ENCODE measurements at regions of chr9 and their contacts with region 1.

Region 1: DNA sequence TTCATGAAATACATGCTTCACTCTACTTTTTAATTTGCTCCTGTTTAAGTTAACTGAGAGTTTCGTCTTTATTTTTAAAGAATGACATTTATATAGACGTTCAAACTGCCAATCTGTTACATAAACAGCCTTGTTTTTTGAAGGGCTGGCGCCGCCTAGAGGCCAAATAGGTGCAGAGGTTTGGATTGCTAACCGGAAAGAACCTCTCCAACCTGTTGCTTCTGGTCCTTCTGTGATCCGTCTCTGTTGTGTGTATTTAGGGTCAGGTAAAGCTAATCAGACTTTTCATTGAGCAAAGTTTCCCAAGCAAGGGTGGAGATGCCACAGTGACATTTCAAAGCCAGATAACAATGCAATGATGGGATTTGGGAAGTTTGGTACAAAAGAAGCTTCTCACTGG is 39.5 kb upstream of the GLIS3 start:
- DNase-seq: peak; percentile 90
- H3K4me3 Mint-ChIP-seq: peak overlapping the region; percentile 58
- H3K27ac Mint-ChIP-seq: peak overlapping the region; percentile 79
- H3K4me1 Mint-ChIP-seq: peaks cover 7% of the 10 kb centered on the region
- H3K27me3 Mint-ChIP-seq: no peaks in the 10 kb centered on the region

Region 2: GRCh38 chr9:3508521-3509291 is 830.7 kb before region 1 on chr9:
- CTCF ChIA-PET with region 1: no interaction called
- POLR2A ChIA-PET with region 1: no interaction called
- intact Hi-C with region 1: no loop called
- DNase-seq: no peak
- H3K4me3 Mint-ChIP-seq: peak overlapping the region; percentile 44
- H3K27ac Mint-ChIP-seq: peak overlapping the region; percentile 60
- H3K4me1 Mint-ChIP-seq: peaks cover 52% of the 10 kb centered on the region
- H3K27me3 Mint-ChIP-seq: no peaks in the 10 kb centered on the region

Region 3: GRCh38 chr9:4077499-4078102 is 261.8 kb before region 1 on chr9:
- CTCF ChIA-PET with region 1: interaction called, 5 read pairs
- POLR2A ChIA-PET with region 1: no interaction called
- intact Hi-C with region 1: loop called (anchors 10 kb)
- DNase-seq: peak; percentile 68
- H3K4me3 Mint-ChIP-seq: no peak overlapping the region
- H3K27ac Mint-ChIP-seq: no peak overlapping the region
- H3K4me1 Mint-ChIP-seq: no peaks in the 10 kb centered on the region
- H3K27me3 Mint-ChIP-seq: peaks cover 6% of the 10 kb centered on the region

Region 4: DNA sequence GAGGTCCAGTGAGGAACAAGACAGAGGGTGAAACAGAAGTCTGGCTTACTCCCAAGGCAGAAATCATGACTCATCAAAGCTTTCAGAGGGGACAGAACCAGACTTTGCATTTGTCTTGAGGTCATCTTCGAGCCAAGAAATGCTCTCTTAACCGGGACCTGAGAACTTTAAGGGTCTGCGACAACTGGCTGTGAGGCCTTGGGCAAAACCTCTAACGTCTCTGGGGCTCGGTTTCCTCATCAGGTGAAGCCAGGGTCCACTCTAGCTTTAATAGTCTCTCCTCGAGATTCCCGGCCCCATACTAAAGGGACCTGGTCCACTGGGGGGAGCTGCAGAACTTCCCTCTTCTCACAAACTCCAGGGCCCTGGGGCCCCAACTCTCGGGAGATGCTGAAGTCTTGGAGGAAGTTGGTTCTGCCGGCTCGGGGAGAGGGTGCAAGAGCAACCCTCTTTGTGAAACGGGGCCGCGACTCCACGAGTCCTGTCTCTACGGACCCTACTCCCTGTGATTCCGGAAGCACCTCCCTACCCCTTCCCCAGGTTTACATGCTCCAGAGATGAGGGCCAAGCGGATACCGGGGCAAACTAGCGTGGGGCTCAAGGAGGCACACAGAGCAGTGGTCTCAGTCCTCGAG is 42.1 kb before region 1 on chr9:
- CTCF ChIA-PET with region 1: interaction called, 4 read pairs
- POLR2A ChIA-PET with region 1: no interaction called
- intact Hi-C with region 1: loop called (anchors 1 kb)
- DNase-seq: peak; percentile 66
- H3K4me3 Mint-ChIP-seq: peak overlapping the region; percentile 89
- H3K27ac Mint-ChIP-seq: peak overlapping the region; percentile 59
- H3K4me1 Mint-ChIP-seq: peaks cover 27% of the 10 kb centered on the region
- H3K27me3 Mint-ChIP-seq: peaks cover 37% of the 10 kb centered on the region

Region 5: GRCh38 chr9:4315582-4316215 is 23.7 kb before region 1 on chr9:
- CTCF ChIA-PET with region 1: interaction called, 80 read pairs
- POLR2A ChIA-PET with region 1: no interaction called
- intact Hi-C with region 1: loop called (anchors 1 kb)
- DNase-seq: peak; percentile 85
- H3K4me3 Mint-ChIP-seq: no peak overlapping the region
- H3K27ac Mint-ChIP-seq: no peak overlapping the region
- H3K4me1 Mint-ChIP-seq: no peaks in the 10 kb centered on the region
- H3K27me3 Mint-ChIP-seq: no peaks in the 10 kb centered on the region

Region 6: DNA sequence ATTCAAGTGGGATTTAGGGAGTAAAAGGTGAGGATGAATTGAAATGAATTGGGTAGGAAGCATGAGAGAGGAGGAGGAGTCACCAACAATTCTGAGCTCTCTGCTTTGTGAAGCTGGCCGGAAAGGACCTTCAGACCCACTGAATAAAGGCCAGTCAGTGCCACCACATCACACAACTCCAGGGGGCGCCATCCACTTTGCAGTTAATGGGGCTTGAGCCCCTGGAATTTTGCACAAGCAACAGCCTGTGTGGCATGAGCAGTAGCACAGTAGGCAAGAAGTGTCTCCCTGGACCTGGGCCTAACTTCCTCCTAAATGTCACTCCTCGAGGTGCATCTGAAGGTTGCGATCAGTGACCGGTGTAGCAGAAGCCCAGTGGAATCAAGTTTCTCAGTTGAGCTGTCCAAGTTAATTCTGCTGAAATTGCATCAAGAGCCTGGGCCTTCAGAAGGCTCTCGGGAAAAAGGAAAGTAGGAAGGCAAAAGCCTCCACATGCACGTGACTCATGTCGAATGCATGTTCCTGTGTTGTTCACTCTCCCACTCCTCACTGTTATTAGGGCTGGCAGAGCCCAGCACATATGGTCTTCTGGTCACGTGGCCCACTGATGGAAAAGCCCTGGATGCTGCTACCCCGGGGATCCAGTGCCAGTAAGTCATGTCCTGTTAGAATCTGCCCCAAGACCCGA is 11.7 kb before region 1 on chr9:
- CTCF ChIA-PET with region 1: interaction called, 17 read pairs
- POLR2A ChIA-PET with region 1: no interaction called
- intact Hi-C with region 1: no loop called
- DNase-seq: no peak
- H3K4me3 Mint-ChIP-seq: no peak overlapping the region
- H3K27ac Mint-ChIP-seq: no peak overlapping the region
- H3K4me1 Mint-ChIP-seq: peaks cover 8% of the 10 kb centered on the region
- H3K27me3 Mint-ChIP-seq: peaks cover 9% of the 10 kb centered on the region

Region 7: DNA sequence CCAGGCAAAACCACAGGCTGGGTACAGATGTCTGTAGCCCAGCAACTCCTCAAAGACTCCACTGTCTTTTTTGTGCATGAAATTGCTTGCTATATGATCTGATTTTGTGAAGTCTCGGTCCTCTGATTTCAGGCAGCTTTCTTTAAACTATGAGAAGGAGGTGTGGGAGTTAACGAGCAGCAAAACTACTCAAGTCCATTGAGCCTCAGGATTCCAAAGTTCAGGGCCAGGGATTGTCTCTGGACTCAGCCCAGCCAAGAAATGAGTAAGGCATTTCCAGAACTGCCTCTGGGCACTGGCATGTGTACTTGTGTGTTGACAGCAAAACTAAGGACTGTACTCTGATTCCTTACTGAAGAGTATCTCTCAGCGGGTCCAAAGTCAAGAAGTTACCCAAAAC is 13.9 kb after region 1 on chr9:
- CTCF ChIA-PET with region 1: interaction called, 21 read pairs
- POLR2A ChIA-PET with region 1: no interaction called
- intact Hi-C with region 1: no loop called
- DNase-seq: no peak
- H3K4me3 Mint-ChIP-seq: no peak overlapping the region
- H3K27ac Mint-ChIP-seq: no peak overlapping the region
- H3K4me1 Mint-ChIP-seq: no peaks in the 10 kb centered on the region
- H3K27me3 Mint-ChIP-seq: peaks cover 2% of the 10 kb centered on the region

Region 8: GRCh38 chr9:4366591-4367330 is 27.4 kb after region 1 on chr9:
- CTCF ChIA-PET with region 1: interaction called, 28 read pairs
- POLR2A ChIA-PET with region 1: no interaction called
- intact Hi-C with region 1: no loop called
- DNase-seq: peak; percentile 45
- H3K4me3 Mint-ChIP-seq: no peak overlapping the region
- H3K27ac Mint-ChIP-seq: no peak overlapping the region
- H3K4me1 Mint-ChIP-seq: peaks cover 2% of the 10 kb centered on the region
- H3K27me3 Mint-ChIP-seq: peaks cover 6% of the 10 kb centered on the region